Mammary epithelial cell (primary cell): ENCODE measurements at regions of chr2 and their contacts with region 1.

Region 1: DNA sequence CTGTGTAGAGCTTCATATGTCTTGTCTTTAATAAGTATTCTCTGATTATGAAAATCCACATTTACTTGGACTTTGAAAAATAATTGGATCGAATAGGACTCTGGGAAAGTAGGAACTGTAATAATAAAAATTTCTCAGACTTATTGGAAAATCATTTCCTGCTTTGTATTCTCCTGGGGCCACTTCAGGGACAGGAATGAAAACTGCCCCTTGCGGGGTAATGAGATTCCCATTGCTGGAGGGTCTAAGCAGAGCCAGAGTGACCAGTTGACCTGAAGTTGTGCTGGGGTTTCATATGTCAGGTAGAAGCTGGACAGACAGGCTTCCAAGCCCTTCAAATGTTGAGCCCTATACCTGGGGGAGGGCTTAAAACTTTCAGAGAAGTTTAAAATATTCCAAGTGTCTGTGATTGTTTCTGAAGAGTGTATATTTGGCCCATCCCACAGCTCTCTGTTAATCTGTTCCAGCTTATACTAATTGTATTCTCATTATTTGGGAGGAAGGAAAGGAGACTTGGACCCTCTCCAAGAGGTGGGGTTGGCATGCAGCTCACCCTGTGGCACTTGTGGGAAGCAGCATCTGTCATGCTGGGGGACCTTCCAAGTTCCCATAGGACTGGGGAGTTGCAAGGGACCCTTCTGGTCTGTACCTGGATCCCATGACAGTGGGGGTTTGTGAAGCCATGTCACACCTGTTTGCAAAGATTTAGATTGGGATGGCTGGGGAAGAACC is 268.7 kb upstream of the ATP5MC3 start:
- DNase-seq: no peak
- H3K4me3 ChIP-seq: no peak overlapping the region
- H3K27ac ChIP-seq: no peak overlapping the region
- H3K4me1 ChIP-seq: no peaks in the 10 kb centered on the region
- H3K27me3 ChIP-seq: no peaks in the 10 kb centered on the region
- CTCF ChIP-seq: no peak

Region 2: DNA sequence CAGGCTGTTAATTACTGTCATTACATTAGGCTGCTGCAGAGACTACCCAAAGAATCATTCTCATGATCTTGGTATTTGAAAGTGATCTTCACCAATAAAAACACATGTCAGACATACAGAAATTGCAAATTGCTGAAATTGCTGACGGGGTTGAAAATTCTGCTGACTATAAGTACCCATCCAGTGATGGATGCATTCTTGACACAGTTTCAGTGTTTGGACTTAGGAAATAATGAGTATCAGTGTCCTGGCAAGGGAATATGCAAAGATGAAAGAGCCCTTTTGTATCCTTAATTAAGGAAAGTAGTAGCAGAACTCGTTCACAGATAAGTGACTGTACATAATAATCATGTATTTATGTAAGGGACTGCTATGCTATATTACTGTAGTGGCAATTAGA is 47.6 kb before region 1 on chr2:
- CTCF ChIA-PET with region 1: no interaction called
- dilution Hi-C with region 1: no loop called
- in situ Hi-C with region 1: no loop called
- intact Hi-C with region 1: no loop called
- DNase-seq: no peak
- H3K4me3 ChIP-seq: no peak overlapping the region
- H3K27ac ChIP-seq: no peak overlapping the region
- H3K4me1 ChIP-seq: no peaks in the 10 kb centered on the region
- H3K27me3 ChIP-seq: no peaks in the 10 kb centered on the region
- CTCF ChIP-seq: no peak

Region 3: DNA sequence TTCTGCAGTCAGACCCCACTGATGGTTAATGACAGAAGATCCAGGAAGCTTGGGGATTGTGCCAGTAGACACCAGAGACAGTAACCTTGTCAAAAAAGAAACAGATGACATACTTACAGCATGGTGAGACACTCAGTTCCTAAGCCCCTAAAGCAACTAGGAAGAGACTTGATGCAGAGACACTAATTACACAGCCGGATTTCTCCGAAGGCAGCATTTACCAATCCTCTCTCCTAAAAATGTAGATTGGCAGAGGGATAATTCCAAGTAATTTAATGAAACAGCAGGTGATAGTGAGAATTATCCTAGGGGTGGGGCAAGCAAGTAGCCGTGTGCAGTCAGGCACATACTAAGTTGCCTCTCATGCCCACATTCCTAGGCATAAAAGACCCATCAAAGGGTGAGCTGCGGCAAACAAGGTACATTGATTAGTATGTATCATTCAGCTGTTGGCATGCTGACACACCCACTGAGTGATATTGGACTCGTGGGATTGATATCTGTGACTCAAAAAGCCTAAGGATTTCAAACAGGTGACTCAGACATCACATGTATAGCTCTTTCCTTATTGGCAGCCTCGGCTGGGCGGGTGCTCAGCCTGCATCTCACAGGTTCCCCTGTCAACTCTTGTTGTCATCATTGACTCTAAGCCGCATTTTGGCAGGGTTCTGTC is 28.0 kb after region 1 on chr2:
- CTCF ChIA-PET with region 1: no interaction called
- dilution Hi-C with region 1: no loop called
- in situ Hi-C with region 1: no loop called
- intact Hi-C with region 1: no loop called
- DNase-seq: no peak
- H3K4me3 ChIP-seq: no peak overlapping the region
- H3K27ac ChIP-seq: no peak overlapping the region
- H3K4me1 ChIP-seq: no peaks in the 10 kb centered on the region
- H3K27me3 ChIP-seq: no peaks in the 10 kb centered on the region
- CTCF ChIP-seq: no peak

Region 4: GRCh38 chr2:175540421-175540820 is 90.2 kb after region 1 on chr2:
- CTCF ChIA-PET with region 1: no interaction called
- dilution Hi-C with region 1: loop called (anchors 5 kb)
- in situ Hi-C with region 1: no loop called
- intact Hi-C with region 1: no loop called
- DNase-seq: no peak
- H3K4me3 ChIP-seq: no peak overlapping the region
- H3K27ac ChIP-seq: no peak overlapping the region
- H3K4me1 ChIP-seq: no peaks in the 10 kb centered on the region
- H3K27me3 ChIP-seq: no peaks in the 10 kb centered on the region
- CTCF ChIP-seq: no peak

Region 5: DNA sequence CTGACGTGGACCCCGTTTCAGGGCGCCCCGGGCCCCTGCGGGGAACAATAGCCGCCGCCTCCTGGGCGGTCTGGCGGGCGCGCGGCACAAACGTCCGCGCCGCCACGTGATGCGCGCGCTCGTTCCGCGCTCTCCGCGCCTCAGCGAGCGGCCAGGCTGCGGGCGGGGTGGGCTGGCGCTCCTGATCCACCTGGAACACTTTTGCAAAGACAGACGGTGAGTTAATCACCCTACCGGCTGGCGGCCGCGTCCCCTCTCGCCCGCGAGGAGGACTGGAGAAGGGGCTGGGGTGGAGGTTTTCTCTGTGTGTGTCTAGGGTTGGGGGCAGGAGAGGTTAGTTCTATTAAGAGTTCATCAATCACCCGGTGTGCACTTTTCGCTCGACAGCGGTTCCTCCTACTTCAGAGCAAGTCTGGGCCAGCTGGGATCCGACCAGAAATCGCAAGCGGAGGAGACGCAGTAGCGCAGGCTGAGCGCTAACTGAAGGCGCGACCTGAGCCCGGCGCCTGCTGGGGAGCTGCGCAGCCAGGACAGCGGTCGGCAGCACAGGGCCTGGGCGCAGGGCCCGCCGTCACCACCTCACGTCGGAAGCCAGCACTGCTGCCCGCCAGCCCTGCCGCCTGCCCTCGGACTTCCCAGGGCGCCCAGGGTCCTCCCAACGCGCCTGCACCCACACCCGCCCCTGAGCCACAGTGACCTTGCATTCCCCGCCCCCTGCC is 728.0 kb after region 1 on chr2:
- CTCF ChIA-PET with region 1: no interaction called
- dilution Hi-C with region 1: no loop called
- in situ Hi-C with region 1: no loop called
- intact Hi-C with region 1: no loop called
- DNase-seq: peak; percentile 68
- H3K4me3 ChIP-seq: peak overlapping the region in 1 of 3 experiments; percentile 11
- H3K27ac ChIP-seq: no peak overlapping the region
- H3K4me1 ChIP-seq: no peaks in the 10 kb centered on the region
- H3K27me3 ChIP-seq: peaks cover 56% of the 10 kb centered on the region
- CTCF ChIP-seq: no peak